ENCODE measurements at regions of chr7 and their contacts with region 1.

Region 1: DNA sequence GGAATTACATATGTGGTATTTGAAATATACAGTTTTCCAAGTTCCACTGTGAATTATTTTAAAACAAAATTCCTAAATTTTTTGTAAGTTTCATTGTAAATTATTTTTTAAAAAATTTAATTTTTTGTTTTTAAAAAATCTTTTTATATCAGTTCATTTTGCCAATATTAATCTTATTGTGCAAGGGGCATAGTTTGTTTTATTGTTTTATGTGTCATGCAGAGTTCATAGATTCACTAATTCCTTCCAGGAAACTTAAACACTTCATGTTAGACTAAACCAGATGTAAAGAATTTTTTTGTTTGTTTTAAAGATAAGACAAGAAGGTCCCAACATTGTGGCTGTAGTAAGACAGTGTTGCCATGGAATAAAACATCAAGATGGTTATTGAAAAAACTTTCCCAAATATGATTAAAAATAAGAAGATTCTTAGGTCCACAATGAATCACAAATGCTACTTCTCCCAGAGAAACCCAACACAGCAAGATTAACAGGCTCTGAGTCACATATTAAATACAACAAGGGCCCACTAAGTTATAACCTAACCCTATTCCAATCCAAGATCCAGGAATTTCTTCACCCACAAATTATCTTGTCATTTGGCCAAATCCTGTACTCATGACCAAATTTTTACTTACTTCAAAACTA is 464.7 kb upstream of the IGFBP3 start:
- DNase-seq: no peak
- H3K4me3 ChIP-seq: no peak overlapping the region
- H3K27ac ChIP-seq: no peak overlapping the region
- H3K4me1 ChIP-seq: peaks cover 7% of the 10 kb centered on the region
- H3K27me3 ChIP-seq: no peaks in the 10 kb centered on the region
- CTCF ChIP-seq: no peak
- POLR2A ChIP-seq: no peak

Region 2: DNA sequence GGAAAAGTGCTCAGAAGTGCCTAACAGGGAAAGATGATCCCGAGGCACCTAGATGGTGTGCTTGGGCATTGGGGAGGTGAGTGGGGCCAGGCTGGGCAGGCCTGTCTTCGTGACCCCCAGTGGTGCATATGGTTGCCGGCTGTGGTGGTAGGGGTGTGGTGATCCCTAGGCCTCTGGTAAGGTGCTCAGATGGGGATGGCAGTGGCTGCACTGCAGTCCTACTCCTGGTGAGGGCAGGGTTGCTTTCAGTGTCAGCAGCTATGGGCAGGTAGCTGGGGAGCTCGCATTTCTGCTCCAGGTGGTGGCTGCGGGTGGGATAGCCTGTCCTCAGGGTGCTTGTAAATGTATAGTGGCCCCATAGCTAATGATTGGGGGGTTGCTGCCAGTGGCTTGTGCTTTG is 1074.2 kb before region 1 on chr7:
- intact Hi-C with region 1: loop called (anchors 10 kb)
- DNase-seq: no peak
- H3K4me3 ChIP-seq: no peak overlapping the region
- H3K27ac ChIP-seq: no peak overlapping the region
- H3K4me1 ChIP-seq: no peaks in the 10 kb centered on the region
- H3K27me3 ChIP-seq: no peaks in the 10 kb centered on the region
- CTCF ChIP-seq: no peak
- POLR2A ChIP-seq: no peak

Region 3: GRCh38 chr7:46301677-46302076 is 84.1 kb before region 1 on chr7:
- intact Hi-C with region 1: no loop called
- DNase-seq: no peak
- H3K4me3 ChIP-seq: no peak overlapping the region
- H3K27ac ChIP-seq: no peak overlapping the region
- H3K4me1 ChIP-seq: no peaks in the 10 kb centered on the region
- H3K27me3 ChIP-seq: no peaks in the 10 kb centered on the region
- CTCF ChIP-seq: no peak
- POLR2A ChIP-seq: no peak

Region 4: GRCh38 chr7:46651073-46651472 is 265.3 kb after region 1 on chr7:
- intact Hi-C with region 1: no loop called
- DNase-seq: no peak
- H3K4me3 ChIP-seq: no peak overlapping the region
- H3K27ac ChIP-seq: no peak overlapping the region
- H3K4me1 ChIP-seq: no peaks in the 10 kb centered on the region
- H3K27me3 ChIP-seq: no peaks in the 10 kb centered on the region
- CTCF ChIP-seq: no peak
- POLR2A ChIP-seq: no peak

Measured in vagina (tissue), 2 donors.